ENCODE measurements at regions of chr4 and their contacts with region 1.

Region 1: DNA sequence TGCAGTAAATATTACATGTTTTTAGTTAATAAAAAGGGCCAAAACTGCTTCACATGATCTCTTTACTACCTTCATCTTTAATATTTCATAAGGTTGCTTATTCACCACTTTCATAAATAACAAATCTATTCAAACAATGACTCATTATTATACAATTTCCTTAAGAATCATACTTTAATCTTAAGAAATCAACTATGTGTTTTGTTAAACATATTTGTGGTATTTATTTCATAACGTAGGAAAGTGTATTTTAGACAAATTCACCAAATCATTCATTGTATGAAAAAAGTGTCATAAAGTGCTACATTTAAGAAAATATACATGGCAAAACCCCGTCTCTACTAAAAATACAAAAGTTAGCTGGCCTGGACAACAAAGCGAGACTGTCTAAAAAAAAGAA is 150.5 kb upstream of the RXFP1 start:
- DNase-seq: no peak
- ATAC-seq: no peak
- H3K4me3 ChIP-seq: no peak overlapping the region
- H3K4me3 Mint-ChIP-seq: no peak overlapping the region
- H3K27ac ChIP-seq: no peak overlapping the region
- H3K27ac Mint-ChIP-seq: no peak overlapping the region
- H3K4me1 ChIP-seq: no peaks in the 10 kb centered on the region
- H3K4me1 Mint-ChIP-seq: no peaks in the 10 kb centered on the region
- H3K27me3 ChIP-seq: no peaks in the 10 kb centered on the region
- H3K27me3 Mint-ChIP-seq: peaks cover 0 to 32% (median 3%) of the 10 kb centered on the region in 5 donors

Region 2: DNA sequence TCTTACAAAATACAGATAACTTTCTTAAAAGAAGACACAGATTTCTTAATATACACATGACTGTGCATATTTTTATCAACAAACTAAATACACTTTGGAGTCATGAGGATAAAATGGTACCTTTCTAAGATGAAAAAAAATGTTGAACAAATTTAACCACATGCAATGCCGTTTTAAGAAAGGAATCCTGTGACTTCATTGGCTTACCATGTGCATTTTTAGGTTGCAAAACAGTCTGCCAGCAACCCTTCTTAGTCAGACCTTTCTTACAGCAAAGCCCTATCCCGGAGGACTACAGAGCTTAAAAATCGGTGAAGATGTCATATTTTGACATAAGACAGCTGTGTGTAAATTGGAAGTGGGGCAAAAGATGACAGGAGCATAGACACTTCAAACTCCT is 250.0 kb before region 1 on chr4:
- CTCF ChIA-PET with region 1: no interaction called
- POLR2A ChIA-PET with region 1: no interaction called
- intact Hi-C with region 1: loop called in 1 of 2 experiments (anchors 10 kb)
- DNase-seq: no peak
- ATAC-seq: peak; percentile 46
- H3K4me3 ChIP-seq: no peak overlapping the region
- H3K4me3 Mint-ChIP-seq: no peak overlapping the region
- H3K27ac ChIP-seq: no peak overlapping the region
- H3K27ac Mint-ChIP-seq: no peak overlapping the region
- H3K4me1 ChIP-seq: no peaks in the 10 kb centered on the region
- H3K4me1 Mint-ChIP-seq: no peaks in the 10 kb centered on the region
- H3K27me3 ChIP-seq: no peaks in the 10 kb centered on the region
- H3K27me3 Mint-ChIP-seq: no peaks in the 10 kb centered on the region

Region 3: DNA sequence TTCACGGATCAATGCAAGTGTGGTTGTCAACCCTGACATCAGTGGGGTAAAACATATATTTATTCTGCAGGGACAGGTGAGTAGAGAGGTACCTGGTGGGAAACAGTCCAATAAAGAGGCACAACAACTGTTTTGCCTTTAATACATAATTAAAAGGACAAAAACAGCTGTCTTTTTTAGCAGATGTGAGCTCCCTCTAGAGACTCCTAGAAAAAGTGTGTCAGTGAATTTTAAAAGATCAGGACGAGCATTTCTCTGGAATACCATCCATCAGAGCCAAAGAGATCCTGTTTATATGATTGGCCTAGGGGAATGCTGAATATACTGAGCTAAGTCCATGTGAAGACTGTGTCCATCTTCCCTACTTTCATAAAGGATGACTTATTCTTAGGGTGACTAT is 102.6 kb before region 1 on chr4:
- CTCF ChIA-PET with region 1: no interaction called
- POLR2A ChIA-PET with region 1: no interaction called
- intact Hi-C with region 1: no loop called
- DNase-seq: no peak
- ATAC-seq: no peak
- H3K4me3 ChIP-seq: no peak overlapping the region
- H3K4me3 Mint-ChIP-seq: no peak overlapping the region
- H3K27ac ChIP-seq: no peak overlapping the region
- H3K27ac Mint-ChIP-seq: no peak overlapping the region
- H3K4me1 ChIP-seq: no peaks in the 10 kb centered on the region
- H3K4me1 Mint-ChIP-seq: no peaks in the 10 kb centered on the region
- H3K27me3 ChIP-seq: no peaks in the 10 kb centered on the region
- H3K27me3 Mint-ChIP-seq: peaks cover 7 to 25% (median 20%) of the 10 kb centered on the region in 5 donors

Measured in naive thymus-derived CD4-positive, alpha-beta T cell (primary cell).